SK-N-SH (cell line): ENCODE measurements at regions of chr11 and their contacts with region 1.

Region 1: DNA sequence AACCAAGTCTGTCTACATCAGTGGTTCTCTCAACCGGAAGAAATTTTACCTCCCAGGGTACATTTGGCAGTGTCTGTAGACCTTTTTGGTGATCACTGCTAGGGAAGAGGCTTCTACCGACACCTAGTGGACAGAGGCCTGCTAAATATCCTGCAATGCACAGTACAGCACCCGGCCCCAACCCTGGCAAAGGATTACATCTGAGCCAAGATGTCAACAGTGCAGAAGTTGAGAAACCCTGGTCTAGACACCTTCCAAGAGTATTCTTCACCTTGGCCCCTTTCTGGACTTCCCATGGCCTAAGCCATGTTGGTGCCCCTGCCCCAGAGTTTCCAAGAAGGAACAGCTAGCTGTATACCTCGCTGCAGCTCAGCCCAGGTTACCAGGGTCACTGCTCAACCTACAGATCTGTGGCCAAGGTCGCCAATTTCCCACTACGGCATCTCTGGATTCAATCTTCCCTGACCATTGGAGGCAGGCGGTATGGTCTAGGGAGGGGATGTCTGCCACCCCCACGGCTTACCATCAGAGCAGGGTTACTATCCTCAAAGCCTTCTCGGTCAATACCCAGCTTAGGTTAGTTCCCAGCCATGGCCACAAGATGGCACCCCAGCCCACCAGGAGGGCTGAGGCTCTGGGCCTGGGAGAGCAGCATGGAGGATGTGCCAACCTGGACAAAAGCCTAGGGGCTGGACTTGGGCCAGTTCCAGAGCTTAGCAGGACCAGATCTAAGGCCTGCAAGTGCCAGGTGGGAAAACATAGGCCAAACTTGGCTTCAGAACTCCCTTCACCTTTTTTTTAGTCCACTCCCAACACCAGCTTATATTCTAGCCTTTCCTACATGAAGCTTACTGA is 3.7 kb upstream of the KCNC1 start:
- DNase-seq: peak; percentile 89
- H3K4me3 ChIP-seq: no peak overlapping the region; a peak in 1 of 4 replicates
- H3K27ac ChIP-seq: no peak overlapping the region
- H3K4me1 ChIP-seq: peaks cover 0 to 13% of the 10 kb centered on the region in 2 experiments; a peak in 1 of 4 replicates
- H3K27me3 ChIP-seq: no peaks in the 10 kb centered on the region; the same call in 1 of the 2 replicates
- CTCF ChIP-seq: peak; percentile 77
- EP300 ChIP-seq: peak in 1 of 2 experiments; percentile 10; a peak in 1 of 4 replicates
- RAD21 ChIP-seq: peak; percentile 98

Region 2: DNA sequence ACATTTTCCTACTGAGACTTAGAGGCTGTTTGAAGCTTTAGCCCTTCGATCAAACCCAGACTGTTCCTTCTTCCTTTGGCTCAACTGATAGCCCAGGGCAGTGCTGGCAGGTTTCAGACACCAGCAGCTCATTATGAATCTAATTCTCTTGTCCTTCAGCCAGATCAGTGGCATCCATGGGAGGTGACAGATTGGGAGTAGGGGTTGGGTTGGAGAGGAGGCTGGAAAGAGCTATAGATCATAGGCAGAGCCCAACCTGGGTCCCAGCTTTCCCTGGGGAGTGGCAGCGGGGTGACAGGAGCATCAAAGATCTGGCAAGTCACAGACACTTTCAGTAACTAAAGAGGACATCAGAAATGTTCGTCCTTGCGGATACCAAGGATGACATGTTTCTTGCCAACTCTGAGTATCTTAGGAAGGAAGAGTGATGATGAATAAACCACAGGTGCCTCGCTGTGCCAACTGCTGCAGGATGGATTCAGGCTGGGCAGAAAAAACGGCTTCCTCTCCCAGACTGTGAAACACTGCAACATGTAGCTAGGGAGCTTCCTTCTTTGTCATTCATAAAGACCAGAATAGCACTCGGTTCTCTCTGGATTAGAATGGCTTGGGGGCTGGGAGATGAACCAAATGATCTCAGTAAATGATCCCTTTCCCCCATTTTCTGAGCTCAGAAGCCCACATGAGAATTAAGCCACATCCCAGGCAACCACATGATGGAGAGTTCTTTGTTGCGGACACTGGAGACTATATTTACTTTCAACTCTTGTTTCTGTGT is 273.2 kb before region 1 on chr11:
- CTCF ChIA-PET with region 1: no interaction called
- POLR2A ChIA-PET with region 1: no interaction called
- DNase-seq: no peak
- H3K4me3 ChIP-seq: no peak overlapping the region
- H3K27ac ChIP-seq: no peak overlapping the region
- H3K4me1 ChIP-seq: peaks cover 0 to 2% of the 10 kb centered on the region in 2 experiments; a peak in 1 of 4 replicates
- H3K27me3 ChIP-seq: peaks cover 15% of the 10 kb centered on the region; the same call in 1 of the 2 replicates
- CTCF ChIP-seq: no peak
- EP300 ChIP-seq: no peak
- RAD21 ChIP-seq: no peak

Region 3: DNA sequence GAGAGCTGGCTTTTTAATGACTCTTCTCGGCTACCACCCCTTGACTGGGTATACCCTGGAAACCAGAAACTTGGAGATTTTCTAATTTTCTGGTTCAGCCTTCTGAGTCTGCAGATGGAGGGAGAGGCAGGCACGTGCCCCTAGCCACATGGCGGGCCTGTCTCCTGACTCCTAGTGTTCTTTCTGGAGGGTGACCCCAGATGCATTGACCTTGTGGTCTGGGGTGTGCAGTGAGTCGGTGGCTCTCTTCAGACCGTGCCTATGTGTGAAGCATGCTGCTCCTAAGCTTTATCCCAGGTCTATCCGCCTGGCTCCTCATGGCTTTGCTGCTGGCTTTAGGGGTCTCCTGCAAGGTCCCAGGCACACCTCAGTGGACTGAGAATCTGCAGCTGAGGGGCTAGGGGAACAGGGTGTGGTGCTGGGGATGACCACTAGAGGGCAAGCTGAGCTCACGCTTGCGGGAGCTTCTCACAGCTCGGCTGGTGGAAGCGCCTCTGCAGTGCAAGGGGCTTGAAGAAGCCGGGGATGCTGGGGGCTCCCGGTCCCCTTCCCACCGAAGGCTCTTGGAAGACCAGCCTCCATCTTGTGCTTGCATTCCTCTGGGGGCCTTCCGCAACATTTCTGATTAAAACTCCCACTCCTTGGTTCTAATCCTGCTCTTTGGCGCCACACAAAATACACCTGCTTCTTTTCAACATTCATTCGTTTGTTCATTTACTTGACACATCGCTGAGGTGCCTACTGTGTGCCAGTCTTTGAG is 132.0 kb before region 1 on chr11:
- CTCF ChIA-PET with region 1: interaction called, 271 read pairs
- POLR2A ChIA-PET with region 1: no interaction called
- DNase-seq: peak; percentile 85
- H3K4me3 ChIP-seq: no peak overlapping the region; a peak in 1 of 4 replicates
- H3K27ac ChIP-seq: no peak overlapping the region
- H3K4me1 ChIP-seq: no peaks in the 10 kb centered on the region; a peak in 1 of 4 replicates
- H3K27me3 ChIP-seq: no peaks in the 10 kb centered on the region
- CTCF ChIP-seq: peak; percentile 87
- EP300 ChIP-seq: no peak
- RAD21 ChIP-seq: peak; percentile 96

Region 4: DNA sequence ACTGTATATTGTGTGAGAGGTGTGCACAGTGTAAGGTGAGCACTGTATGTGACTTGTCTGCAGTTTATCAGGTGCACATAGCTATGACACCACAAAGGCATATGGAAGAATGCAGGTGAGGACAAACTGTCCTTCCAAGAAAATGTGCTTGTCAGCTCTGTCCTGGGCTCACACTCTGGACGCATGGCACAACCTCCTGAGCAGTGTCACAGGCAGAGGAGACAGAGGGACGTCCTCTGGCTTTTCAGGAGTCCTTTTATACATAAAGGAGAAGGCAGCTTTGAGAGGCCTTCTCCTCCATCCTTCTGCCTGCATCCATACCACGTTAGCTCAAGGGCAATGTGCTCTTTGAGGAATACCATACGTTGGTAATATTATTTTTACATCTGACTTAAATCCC is 19.0 kb before region 1 on chr11:
- CTCF ChIA-PET with region 1: interaction called, 137 read pairs
- POLR2A ChIA-PET with region 1: no interaction called
- DNase-seq: no peak
- H3K4me3 ChIP-seq: no peak overlapping the region
- H3K27ac ChIP-seq: no peak overlapping the region
- H3K4me1 ChIP-seq: no peaks in the 10 kb centered on the region
- H3K27me3 ChIP-seq: peaks cover 18% of the 10 kb centered on the region
- CTCF ChIP-seq: no peak
- EP300 ChIP-seq: no peak
- RAD21 ChIP-seq: no peak

Region 5: DNA sequence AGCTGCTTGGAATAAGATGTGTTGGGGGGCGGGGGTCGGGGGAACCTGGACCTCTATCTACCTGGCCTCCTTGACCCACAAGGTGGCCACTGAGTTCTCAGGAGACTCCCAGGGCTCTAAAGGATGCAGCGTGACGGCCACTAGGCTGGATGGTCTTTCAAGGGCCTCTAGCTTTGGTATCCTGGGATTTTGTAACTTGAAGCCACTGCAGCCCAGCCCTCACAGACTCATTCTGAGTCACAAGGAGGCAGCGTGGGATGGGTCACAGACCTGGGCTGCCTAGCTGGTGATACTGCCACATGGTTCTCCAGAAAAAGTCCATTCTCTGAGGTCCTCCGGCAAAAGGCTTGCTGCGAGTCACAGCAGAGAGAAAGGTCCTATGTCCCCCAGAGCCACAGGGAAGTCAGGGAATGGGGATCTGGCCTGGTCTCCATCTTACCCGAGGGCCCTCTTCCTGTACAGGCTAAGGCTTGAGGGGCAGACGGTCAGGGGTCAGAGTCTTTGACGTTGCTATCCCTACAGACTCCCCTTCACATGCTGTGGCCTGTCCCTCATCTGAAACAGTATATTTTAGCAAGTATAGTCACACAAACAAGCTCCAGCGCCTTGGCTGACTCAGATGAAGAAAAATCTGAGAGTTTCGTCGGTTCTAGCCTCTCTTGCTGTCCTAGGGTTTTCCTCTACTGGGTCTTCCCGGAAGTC is 56.1 kb after region 1 on chr11:
- CTCF ChIA-PET with region 1: no interaction called
- POLR2A ChIA-PET with region 1: no interaction called
- DNase-seq: no peak
- H3K4me3 ChIP-seq: no peak overlapping the region
- H3K27ac ChIP-seq: no peak overlapping the region
- H3K4me1 ChIP-seq: no peaks in the 10 kb centered on the region
- H3K27me3 ChIP-seq: no peaks in the 10 kb centered on the region
- CTCF ChIP-seq: no peak
- EP300 ChIP-seq: no peak
- RAD21 ChIP-seq: no peak

Region 6: GRCh38 chr11:17810746-17811145 is 79.9 kb after region 1 on chr11:
- CTCF ChIA-PET with region 1: interaction called, 35 read pairs
- POLR2A ChIA-PET with region 1: no interaction called
- DNase-seq: peak; percentile 54
- H3K4me3 ChIP-seq: no peak overlapping the region
- H3K27ac ChIP-seq: peak overlapping the region in 1 of 2 experiments; percentile 65; a peak in 2 of 4 replicates
- H3K4me1 ChIP-seq: peaks cover 18 to 45% of the 10 kb centered on the region in 2 experiments
- H3K27me3 ChIP-seq: no peaks in the 10 kb centered on the region
- CTCF ChIP-seq: no peak
- EP300 ChIP-seq: no peak
- RAD21 ChIP-seq: no peak

Region 7: DNA sequence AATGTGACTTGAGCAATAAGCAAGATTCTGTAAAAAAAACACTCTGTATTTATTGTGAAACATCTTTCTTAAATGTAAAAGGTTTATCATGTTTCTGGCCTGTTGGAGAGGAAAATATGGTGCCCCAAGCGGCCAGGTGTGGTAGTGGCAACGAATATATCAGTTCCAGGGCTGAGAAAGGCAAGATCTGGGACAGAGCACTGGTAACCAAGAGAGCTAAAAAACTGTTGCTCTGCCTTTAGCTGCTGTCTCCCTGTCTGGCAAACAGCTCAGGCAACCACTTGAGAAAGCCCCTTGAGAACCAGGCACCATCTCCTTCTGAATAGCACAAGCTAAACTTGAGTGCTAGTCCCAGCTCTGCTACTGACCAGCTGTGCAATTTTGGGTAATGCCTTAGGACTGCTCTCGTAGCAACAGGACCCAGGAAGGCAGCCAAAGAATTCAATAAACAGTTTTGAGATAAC is 133.7 kb after region 1 on chr11:
- CTCF ChIA-PET with region 1: interaction called, 21 read pairs
- POLR2A ChIA-PET with region 1: no interaction called
- DNase-seq: no peak
- H3K4me3 ChIP-seq: no peak overlapping the region
- H3K27ac ChIP-seq: no peak overlapping the region
- H3K4me1 ChIP-seq: no peaks in the 10 kb centered on the region; a peak in 1 of 4 replicates
- H3K27me3 ChIP-seq: no peaks in the 10 kb centered on the region
- CTCF ChIP-seq: peak; percentile 39
- EP300 ChIP-seq: no peak
- RAD21 ChIP-seq: no peak

Region 8: GRCh38 chr11:17915500-17916143 is 184.8 kb after region 1 on chr11:
- CTCF ChIA-PET with region 1: interaction called, 174 read pairs
- POLR2A ChIA-PET with region 1: no interaction called
- DNase-seq: no peak
- H3K4me3 ChIP-seq: no peak overlapping the region
- H3K27ac ChIP-seq: no peak overlapping the region
- H3K4me1 ChIP-seq: no peaks in the 10 kb centered on the region; a peak in 2 of 4 replicates
- H3K27me3 ChIP-seq: no peaks in the 10 kb centered on the region
- CTCF ChIP-seq: no peak
- EP300 ChIP-seq: no peak
- RAD21 ChIP-seq: no peak

Region 9: GRCh38 chr11:17978553-17979287 is 247.9 kb after region 1 on chr11:
- CTCF ChIA-PET with region 1: interaction called, 730 read pairs
- POLR2A ChIA-PET with region 1: interaction called, 9 read pairs
- DNase-seq: peak; percentile 61
- H3K4me3 ChIP-seq: no peak overlapping the region; a peak in 1 of 4 replicates
- H3K27ac ChIP-seq: no peak overlapping the region
- H3K4me1 ChIP-seq: peaks cover 0 to 5% of the 10 kb centered on the region in 2 experiments; a peak in 1 of 4 replicates
- H3K27me3 ChIP-seq: no peaks in the 10 kb centered on the region
- CTCF ChIP-seq: peak; percentile 85
- EP300 ChIP-seq: no peak
- RAD21 ChIP-seq: peak; percentile 79